Activated CD4-positive, alpha-beta T cell treated with anti-CD3 and anti-CD28 coated beads for 36 hours (primary cell): ENCODE measurements at regions of chr12 and their contacts with region 1.

Region 1: GRCh38 chr12:102484428-102484958 is 4.1 kb upstream of the IGF1 start:
- DNase-seq: peak; percentile 75
- ATAC-seq: peak; percentile 87
- H3K4me3 Mint-ChIP-seq: peak overlapping the region; percentile 41
- H3K27ac Mint-ChIP-seq: peak overlapping the region; percentile 95
- H3K4me1 Mint-ChIP-seq: peaks cover 32% of the 10 kb centered on the region
- H3K27me3 Mint-ChIP-seq: peaks cover 1% of the 10 kb centered on the region

Region 2: GRCh38 chr12:101919447-101919846 is 565.0 kb before region 1 on chr12:
- CTCF ChIA-PET with region 1: no interaction called
- POLR2A ChIA-PET with region 1: no interaction called
- intact Hi-C with region 1: loop called in 1 of 2 experiments (anchors 1 kb)
- DNase-seq: no peak
- ATAC-seq: no peak
- H3K4me3 Mint-ChIP-seq: no peak overlapping the region
- H3K27ac Mint-ChIP-seq: no peak overlapping the region
- H3K4me1 Mint-ChIP-seq: peaks cover 2% of the 10 kb centered on the region
- H3K27me3 Mint-ChIP-seq: peaks cover 6% of the 10 kb centered on the region

Region 3: GRCh38 chr12:102095675-102096263 is 388.7 kb before region 1 on chr12:
- CTCF ChIA-PET with region 1: no interaction called
- POLR2A ChIA-PET with region 1: no interaction called
- intact Hi-C with region 1: loop called in 1 of 2 experiments (anchors 10 kb)
- DNase-seq: no peak
- ATAC-seq: peak; percentile 64
- H3K4me3 Mint-ChIP-seq: no peak overlapping the region
- H3K27ac Mint-ChIP-seq: no peak overlapping the region
- H3K4me1 Mint-ChIP-seq: peaks cover 7% of the 10 kb centered on the region
- H3K27me3 Mint-ChIP-seq: no peaks in the 10 kb centered on the region

Region 4: GRCh38 chr12:102119674-102120563 is 364.6 kb before region 1 on chr12 and contains the starts of genes NUP37 and PARPBP:
- CTCF ChIA-PET with region 1: no interaction called
- POLR2A ChIA-PET with region 1: no interaction called
- intact Hi-C with region 1: loop called in 1 of 2 experiments (anchors 1 kb)
- DNase-seq: peak; percentile 96
- ATAC-seq: peak; percentile 93
- H3K4me3 Mint-ChIP-seq: peak within 1 kb of the TSS; percentile 95
- H3K27ac Mint-ChIP-seq: peak within 1 kb of the TSS; percentile 95
- H3K4me1 Mint-ChIP-seq: peaks cover 19% of the 10 kb centered on the region
- H3K27me3 Mint-ChIP-seq: no peaks in the 10 kb centered on the region
- total RNA-seq, gene NUP37: 100 to 108 TPM
- total RNA-seq, gene PARPBP: 21.7 to 26.4 TPM

Region 5: DNA sequence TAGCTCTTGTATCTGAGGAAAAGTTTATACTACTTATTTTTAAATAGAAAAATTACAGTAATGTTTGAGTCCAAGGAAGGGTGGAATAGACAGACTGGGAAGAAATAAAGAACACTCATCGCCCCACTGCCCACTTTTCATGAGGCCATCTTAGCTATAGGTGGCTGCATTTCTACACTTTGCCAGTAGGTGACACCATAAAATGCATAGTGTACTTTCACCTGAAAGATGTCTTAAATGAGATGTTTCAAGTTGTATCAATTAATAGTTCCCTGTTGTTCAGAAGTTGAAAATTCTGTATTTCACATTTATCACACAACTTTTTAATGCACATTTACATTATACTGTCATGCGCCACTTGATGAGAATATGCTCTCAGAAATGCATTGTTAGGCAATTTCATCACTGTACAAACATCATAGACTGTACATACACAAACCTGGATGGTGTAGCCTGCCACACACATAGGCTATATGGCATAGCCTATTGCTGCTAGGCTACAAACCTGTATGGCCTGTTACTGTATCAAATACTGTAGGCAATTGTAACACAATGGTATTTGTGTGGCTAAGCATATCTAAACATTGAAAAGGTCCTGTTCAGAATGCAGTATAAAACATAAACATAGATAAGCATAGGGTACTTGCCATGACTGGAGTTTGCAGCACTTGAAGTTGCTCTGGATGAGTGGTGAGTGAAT is 314.4 kb before region 1 on chr12:
- CTCF ChIA-PET with region 1: interaction called, 4 read pairs
- POLR2A ChIA-PET with region 1: no interaction called
- intact Hi-C with region 1: loop called (anchors 1 to 2 kb)
- DNase-seq: peak; percentile 15
- ATAC-seq: peak; percentile 60
- H3K4me3 Mint-ChIP-seq: no peak overlapping the region
- H3K27ac Mint-ChIP-seq: no peak overlapping the region
- H3K4me1 Mint-ChIP-seq: peaks cover 14% of the 10 kb centered on the region
- H3K27me3 Mint-ChIP-seq: no peaks in the 10 kb centered on the region

Region 6: GRCh38 chr12:102300824-102301461 is 183.6 kb before region 1 on chr12:
- CTCF ChIA-PET with region 1: no interaction called
- POLR2A ChIA-PET with region 1: no interaction called
- intact Hi-C with region 1: loop called (anchors 1 to 2 kb)
- DNase-seq: peak; percentile 19
- ATAC-seq: peak; percentile 88
- H3K4me3 Mint-ChIP-seq: no peak overlapping the region
- H3K27ac Mint-ChIP-seq: no peak overlapping the region
- H3K4me1 Mint-ChIP-seq: no peaks in the 10 kb centered on the region
- H3K27me3 Mint-ChIP-seq: peaks cover 2% of the 10 kb centered on the region

Region 7: GRCh38 chr12:102374190-102374589 is 110.3 kb before region 1 on chr12:
- CTCF ChIA-PET with region 1: no interaction called
- POLR2A ChIA-PET with region 1: no interaction called
- intact Hi-C with region 1: loop called in 1 of 2 experiments (anchors 5 kb)
- DNase-seq: no peak
- ATAC-seq: no peak
- H3K4me3 Mint-ChIP-seq: no peak overlapping the region
- H3K27ac Mint-ChIP-seq: no peak overlapping the region
- H3K4me1 Mint-ChIP-seq: peaks cover 5% of the 10 kb centered on the region
- H3K27me3 Mint-ChIP-seq: no peaks in the 10 kb centered on the region